AG04450 (cell line): ENCODE measurements at regions of chr3 and their contacts with region 1.

Region 1: DNA sequence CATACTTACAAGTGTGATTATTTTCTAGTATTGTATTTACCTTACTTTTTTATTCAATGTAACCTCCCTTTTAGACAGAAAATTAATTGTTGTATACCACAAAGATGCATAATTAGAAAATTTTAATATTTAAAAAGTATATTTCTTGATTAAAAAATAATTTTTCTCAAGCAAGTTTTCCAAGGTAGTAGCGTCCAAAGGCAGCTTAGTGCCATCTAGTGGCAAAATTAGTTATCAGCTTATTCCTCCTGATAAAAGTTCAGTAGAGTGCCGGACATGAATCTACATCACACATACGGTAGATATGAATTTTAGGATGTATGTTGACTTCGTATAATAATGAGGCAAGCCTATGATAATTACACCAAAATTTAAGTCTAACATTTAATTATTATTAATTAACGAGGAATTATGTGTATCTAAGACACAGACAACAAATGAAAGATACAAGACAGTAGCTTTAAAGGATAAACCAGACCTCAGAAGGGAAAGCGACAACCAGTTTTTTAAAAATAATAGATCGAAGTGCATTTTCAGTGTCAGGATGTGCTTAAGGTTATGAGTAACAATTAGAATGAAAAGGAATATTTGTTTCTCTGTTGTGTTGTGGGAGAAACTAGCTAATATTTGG is 405.9 kb downstream of the ROBO1 start:
- DNase-seq: peak; percentile 15
- H3K4me3 ChIP-seq: no peak overlapping the region
- H3K27ac ChIP-seq: no peak overlapping the region
- H3K27me3 ChIP-seq: no peaks in the 10 kb centered on the region
- CTCF ChIP-seq: peak; percentile 83

Region 2: GRCh38 chr3:78659386-78659987 is 702.4 kb before region 1 on chr3:
- CTCF ChIA-PET with region 1: interaction called, 19 read pairs
- POLR2A ChIA-PET with region 1: no interaction called
- DNase-seq: peak; percentile 23
- H3K4me3 ChIP-seq: no peak overlapping the region
- H3K27ac ChIP-seq: no peak overlapping the region
- H3K27me3 ChIP-seq: no peaks in the 10 kb centered on the region
- CTCF ChIP-seq: peak; percentile 60

Region 3: GRCh38 chr3:79032686-79033318 is 329.1 kb before region 1 on chr3:
- CTCF ChIA-PET with region 1: interaction called, 41 read pairs
- POLR2A ChIA-PET with region 1: no interaction called
- DNase-seq: peak; percentile 13
- H3K4me3 ChIP-seq: no peak overlapping the region
- H3K27ac ChIP-seq: no peak overlapping the region
- H3K27me3 ChIP-seq: no peaks in the 10 kb centered on the region
- CTCF ChIP-seq: peak; percentile 68

Region 4: DNA sequence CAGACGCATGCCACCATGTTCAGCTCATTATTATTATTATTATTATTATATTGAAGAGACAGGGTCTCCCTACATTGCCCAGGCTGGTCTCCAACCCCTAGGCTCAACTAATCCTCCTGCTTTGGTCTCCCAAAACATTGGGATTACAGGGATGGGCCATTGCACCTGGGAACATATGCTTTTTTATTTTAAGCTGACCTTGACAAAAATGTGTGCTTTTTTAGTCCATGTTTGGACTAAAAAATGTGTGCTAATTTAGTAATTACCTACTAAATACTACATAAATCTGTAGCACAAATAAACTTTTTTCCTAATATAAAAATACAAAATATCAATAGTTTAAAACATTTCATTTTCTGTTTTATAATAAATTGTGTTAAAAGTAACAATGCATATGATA is 287.3 kb before region 1 on chr3:
- CTCF ChIA-PET with region 1: interaction called, 10 read pairs
- POLR2A ChIA-PET with region 1: no interaction called
- DNase-seq: no peak
- H3K4me3 ChIP-seq: no peak overlapping the region
- H3K27ac ChIP-seq: no peak overlapping the region
- H3K27me3 ChIP-seq: no peaks in the 10 kb centered on the region
- CTCF ChIP-seq: no peak

Region 5: GRCh38 chr3:79255702-79256101 is 106.2 kb before region 1 on chr3:
- CTCF ChIA-PET with region 1: no interaction called
- POLR2A ChIA-PET with region 1: no interaction called
- DNase-seq: no peak
- H3K4me3 ChIP-seq: no peak overlapping the region
- H3K27ac ChIP-seq: no peak overlapping the region
- H3K27me3 ChIP-seq: no peaks in the 10 kb centered on the region
- CTCF ChIP-seq: no peak

Region 6: GRCh38 chr3:79297237-79297960 is 64.5 kb before region 1 on chr3:
- CTCF ChIA-PET with region 1: no interaction called
- POLR2A ChIA-PET with region 1: no interaction called
- DNase-seq: peak; percentile 85
- H3K4me3 ChIP-seq: no peak overlapping the region
- H3K27ac ChIP-seq: no peak overlapping the region
- H3K27me3 ChIP-seq: no peaks in the 10 kb centered on the region
- CTCF ChIP-seq: no peak

Region 7: GRCh38 chr3:79597709-79598108 is 235.8 kb after region 1 on chr3:
- CTCF ChIA-PET with region 1: no interaction called
- POLR2A ChIA-PET with region 1: no interaction called
- DNase-seq: no peak
- H3K4me3 ChIP-seq: no peak overlapping the region
- H3K27ac ChIP-seq: no peak overlapping the region
- H3K27me3 ChIP-seq: no peaks in the 10 kb centered on the region
- CTCF ChIP-seq: no peak